ENCODE measurements at regions of chr4 and their contacts with region 1.

Region 1: DNA sequence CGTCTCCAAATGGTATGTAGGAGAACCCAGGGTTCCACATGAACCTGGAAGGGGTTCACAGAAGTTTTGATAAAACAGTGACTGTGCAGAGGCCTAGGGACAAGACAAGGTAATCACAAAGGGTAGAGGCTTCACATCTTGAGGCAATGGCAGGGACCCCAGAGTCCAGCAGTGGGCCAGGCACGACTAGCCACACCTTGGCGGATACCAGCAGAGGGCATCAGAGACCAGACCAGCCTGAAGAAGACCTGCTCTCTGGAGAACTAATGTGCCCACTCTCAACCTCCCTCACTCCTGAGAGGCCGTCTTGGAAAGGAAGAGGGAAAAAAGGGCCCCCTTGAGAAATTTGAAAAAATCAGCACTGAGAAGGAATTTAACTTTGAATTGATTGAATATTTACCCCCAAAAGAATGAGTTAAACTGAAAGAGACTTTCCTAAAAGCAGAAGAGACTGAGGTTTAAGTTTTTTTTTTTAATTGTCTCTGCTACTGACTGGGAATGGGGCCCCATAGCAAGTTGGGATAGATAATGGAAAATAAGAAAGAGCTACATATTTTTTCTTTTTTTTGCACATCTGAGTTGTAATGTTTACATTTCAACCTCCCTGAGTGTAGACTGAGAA is 243.8 kb upstream of the JADE1 start:
- DNase-seq: peak; percentile 49
- ATAC-seq: peak; percentile 47
- H3K4me3 Mint-ChIP-seq: no peak overlapping the region
- H3K27ac Mint-ChIP-seq: no peak overlapping the region
- H3K4me1 Mint-ChIP-seq: no peaks in the 10 kb centered on the region
- H3K27me3 Mint-ChIP-seq: no peaks in the 10 kb centered on the region

Region 2: GRCh38 chr4:128553686-128554515 is 11.8 kb before region 1 on chr4:
- CTCF ChIA-PET with region 1: interaction called, 12 read pairs
- POLR2A ChIA-PET with region 1: no interaction called
- intact Hi-C with region 1: no loop called
- DNase-seq: no peak
- ATAC-seq: peak; percentile 8
- H3K4me3 Mint-ChIP-seq: peak overlapping the region; percentile 76
- H3K27ac Mint-ChIP-seq: no peak overlapping the region
- H3K4me1 Mint-ChIP-seq: peaks cover 13% of the 10 kb centered on the region
- H3K27me3 Mint-ChIP-seq: peaks cover 8% of the 10 kb centered on the region

Region 3: GRCh38 chr4:128583753-128584712 is 18.4 kb after region 1 on chr4:
- CTCF ChIA-PET with region 1: no interaction called
- POLR2A ChIA-PET with region 1: no interaction called
- intact Hi-C with region 1: no loop called
- DNase-seq: no peak
- ATAC-seq: no peak
- H3K4me3 Mint-ChIP-seq: no peak overlapping the region
- H3K27ac Mint-ChIP-seq: no peak overlapping the region
- H3K4me1 Mint-ChIP-seq: no peaks in the 10 kb centered on the region
- H3K27me3 Mint-ChIP-seq: no peaks in the 10 kb centered on the region

Measured in activated CD4-positive, alpha-beta T cell treated with anti-CD3 and anti-CD28 coated beads for 36 hours (primary cell).